ENCODE measurements at regions of chr16 and their contacts with region 1.

Region 1: DNA sequence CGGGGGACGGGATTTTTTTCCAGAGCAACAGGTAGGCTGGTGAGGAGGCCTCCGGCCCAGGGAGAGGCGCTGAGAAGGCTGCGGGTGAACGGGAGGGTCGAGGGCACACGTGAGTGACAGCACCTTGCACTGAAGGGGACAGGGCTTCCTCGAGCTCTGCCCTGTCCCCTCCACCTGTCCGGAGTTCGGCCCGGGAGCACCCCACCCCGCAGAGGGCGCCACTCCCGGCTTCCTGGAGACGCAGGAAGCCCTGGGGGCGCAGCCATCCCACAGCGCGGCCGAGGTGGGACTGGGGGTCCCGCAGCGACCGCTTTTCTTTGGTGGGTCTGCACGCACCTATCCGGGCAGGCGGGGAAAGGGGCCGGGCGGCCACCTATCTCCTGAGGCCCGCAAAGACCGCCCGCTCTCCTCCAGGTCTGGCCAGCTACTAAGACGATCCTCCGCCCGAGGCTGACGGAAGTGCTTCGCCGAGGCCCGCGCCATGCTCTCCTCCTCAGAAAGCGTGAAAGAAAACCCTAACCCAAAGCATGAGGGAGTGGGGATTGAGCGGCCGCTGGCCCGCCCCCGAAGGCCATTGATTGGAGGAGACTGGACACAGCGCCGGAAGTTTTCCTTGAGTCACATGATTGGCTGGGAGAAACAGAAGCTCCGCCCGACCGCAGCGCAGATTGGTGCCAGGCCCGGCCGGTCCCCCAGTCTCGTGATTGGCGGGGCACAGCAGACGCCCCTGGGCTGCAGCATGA is 34.3 kb downstream of the DDX19A start:
- DNase-seq: peak; percentile 93
- ATAC-seq: peak; percentile 90
- H3K4me3 ChIP-seq: peak overlapping the region; percentile 90 to 94
- H3K27ac ChIP-seq: peak overlapping the region; percentile 98
- H3K4me1 ChIP-seq: peaks cover 16 to 30% of the 10 kb centered on the region in 2 experiments; a peak in 3 of 4 replicates
- H3K27me3 ChIP-seq: no peaks in the 10 kb centered on the region
- CTCF ChIP-seq: peak in 2 of 3 experiments; percentile 21 to 32; a peak in 2 of 6 replicates
- POLR2A ChIP-seq: peak; percentile 92
- RAD21 ChIP-seq: peak; percentile 40

Region 2: GRCh38 chr16:70345840-70346239 is 35.2 kb before region 1 on chr16:
- CTCF ChIA-PET with region 1: no interaction called
- POLR2A ChIA-PET with region 1: interaction called, 11 read pairs
- RAD21 ChIA-PET with region 1: no interaction called
- intact Hi-C with region 1: no loop called
- DNase-seq: no peak
- ATAC-seq: no peak
- H3K4me3 ChIP-seq: peak overlapping the region; percentile 72 to 94
- H3K27ac ChIP-seq: peak overlapping the region; percentile 81
- H3K4me1 ChIP-seq: peaks cover 8 to 15% of the 10 kb centered on the region in 2 experiments
- H3K27me3 ChIP-seq: no peaks in the 10 kb centered on the region
- CTCF ChIP-seq: no peak
- POLR2A ChIP-seq: no peak
- RAD21 ChIP-seq: no peak

Region 3: DNA sequence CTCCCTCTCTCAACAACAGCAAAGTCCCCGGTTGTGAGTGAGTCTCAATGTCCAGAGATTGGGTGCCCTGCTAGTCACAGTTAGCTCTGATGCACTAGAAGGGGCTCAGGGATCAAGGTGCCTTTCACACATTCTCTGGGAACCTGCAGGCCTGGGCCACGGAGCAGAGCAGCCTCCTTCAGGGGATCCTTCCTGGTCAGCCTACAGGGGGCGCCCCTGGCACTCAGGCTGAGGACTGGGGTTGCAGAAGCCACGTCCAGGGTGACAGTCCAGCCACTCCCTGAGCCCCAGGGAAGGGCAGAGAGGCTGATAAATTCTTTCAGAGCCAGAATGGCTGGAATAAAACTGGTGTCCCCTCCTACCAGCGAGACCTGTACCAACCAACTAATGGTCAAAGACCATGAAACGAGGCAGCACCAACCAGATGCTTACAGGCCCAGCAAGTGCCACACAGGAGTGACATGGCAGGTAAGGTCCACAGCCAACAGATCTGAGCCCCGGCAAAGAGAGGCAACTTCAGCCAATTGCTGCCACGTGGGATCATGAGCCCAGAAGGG is 14.4 kb after region 1 on chr16:
- CTCF ChIA-PET with region 1: no interaction called
- POLR2A ChIA-PET with region 1: interaction called, 18 read pairs
- RAD21 ChIA-PET with region 1: no interaction called
- intact Hi-C with region 1: no loop called
- DNase-seq: no peak
- ATAC-seq: peak; percentile 92
- H3K4me3 ChIP-seq: no peak overlapping the region
- H3K27ac ChIP-seq: no peak overlapping the region
- H3K4me1 ChIP-seq: peaks cover 0 to 29% of the 10 kb centered on the region in 2 experiments; a peak in 3 of 4 replicates
- H3K27me3 ChIP-seq: no peaks in the 10 kb centered on the region
- CTCF ChIP-seq: peak; percentile 80 to 93 (median 91)
- POLR2A ChIP-seq: no peak
- RAD21 ChIP-seq: peak; percentile 94

Region 4: GRCh38 chr16:70438969-70439862 is 58.2 kb after region 1 on chr16 and contains the start of gene ST3GAL2:
- CTCF ChIA-PET with region 1: no interaction called
- POLR2A ChIA-PET with region 1: interaction called, 8 read pairs
- RAD21 ChIA-PET with region 1: no interaction called
- intact Hi-C with region 1: loop called (anchors 5 kb)
- DNase-seq: peak; percentile 54
- ATAC-seq: peak; percentile 92
- H3K4me3 ChIP-seq: peak within 1 kb of the TSS; percentile 56 to 70
- H3K27ac ChIP-seq: peak within 1 kb of the TSS; percentile 33; the same call in 1 of the 2 replicates
- H3K4me1 ChIP-seq: peaks cover 28 to 44% of the 10 kb centered on the region in 2 experiments
- H3K27me3 ChIP-seq: no peaks in the 10 kb centered on the region
- CTCF ChIP-seq: no peak
- POLR2A ChIP-seq: no peak
- RAD21 ChIP-seq: no peak
- total RNA-seq, gene ST3GAL2: 9.5 TPM

Region 5: DNA sequence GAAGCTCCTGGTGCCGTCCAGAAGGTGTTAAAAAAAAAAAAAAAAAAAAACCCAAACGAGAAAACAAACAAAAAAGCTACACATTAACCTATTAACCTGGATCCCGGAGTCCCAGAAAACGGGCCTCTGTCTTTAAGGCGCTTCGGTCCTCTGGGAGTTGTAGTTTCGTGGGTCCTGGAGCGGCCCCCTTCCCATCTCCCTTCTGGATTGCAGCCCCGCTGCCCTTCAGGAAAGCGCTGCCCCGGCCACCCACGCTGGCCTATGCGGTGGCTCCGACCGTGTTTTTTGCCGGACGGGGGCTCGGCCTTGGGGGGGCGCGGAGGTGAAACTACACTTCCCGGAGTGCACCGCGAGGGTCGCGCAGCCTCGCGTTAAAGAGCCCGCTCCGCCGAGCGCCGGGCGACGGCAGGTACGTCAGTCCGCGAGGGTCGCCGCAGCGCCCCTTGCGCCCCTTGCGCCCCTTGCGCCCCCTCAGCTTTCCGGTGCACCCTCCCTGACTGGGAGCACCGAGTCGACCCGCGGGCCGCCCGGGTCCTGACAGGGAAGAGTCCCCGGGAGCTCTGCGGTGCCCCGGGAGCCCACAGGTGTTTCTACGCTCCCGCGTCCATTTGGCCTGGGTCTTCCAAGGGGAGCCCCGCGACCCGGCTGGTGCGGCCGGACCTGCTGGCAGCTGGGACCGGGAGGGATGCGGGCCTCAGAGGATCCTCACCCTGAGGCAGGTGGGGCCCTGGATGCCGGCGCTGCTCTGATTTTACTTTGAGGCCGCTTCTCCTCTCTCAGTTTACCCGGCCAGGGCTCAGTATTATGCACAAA is 73.4 kb after region 1 on chr16 and contains the start of gene FCSK:
- CTCF ChIA-PET with region 1: interaction called, 4 read pairs
- POLR2A ChIA-PET with region 1: interaction called, 12 read pairs
- RAD21 ChIA-PET with region 1: no interaction called
- intact Hi-C with region 1: loop called (anchors 2 kb)
- DNase-seq: peak; percentile 50
- ATAC-seq: peak; percentile 87
- H3K4me3 ChIP-seq: peak within 1 kb of the TSS; percentile 90 to 92
- H3K27ac ChIP-seq: peak within 1 kb of the TSS; percentile 96
- H3K4me1 ChIP-seq: peaks cover 3 to 20% of the 10 kb centered on the region in 2 experiments; a peak in 2 of 4 replicates
- H3K27me3 ChIP-seq: no peaks in the 10 kb centered on the region
- CTCF ChIP-seq: no peak
- POLR2A ChIP-seq: no peak
- RAD21 ChIP-seq: peak; percentile 27; the same call in 1 of the 2 replicates
- total RNA-seq, gene FCSK: 17.1 TPM

Region 6: DNA sequence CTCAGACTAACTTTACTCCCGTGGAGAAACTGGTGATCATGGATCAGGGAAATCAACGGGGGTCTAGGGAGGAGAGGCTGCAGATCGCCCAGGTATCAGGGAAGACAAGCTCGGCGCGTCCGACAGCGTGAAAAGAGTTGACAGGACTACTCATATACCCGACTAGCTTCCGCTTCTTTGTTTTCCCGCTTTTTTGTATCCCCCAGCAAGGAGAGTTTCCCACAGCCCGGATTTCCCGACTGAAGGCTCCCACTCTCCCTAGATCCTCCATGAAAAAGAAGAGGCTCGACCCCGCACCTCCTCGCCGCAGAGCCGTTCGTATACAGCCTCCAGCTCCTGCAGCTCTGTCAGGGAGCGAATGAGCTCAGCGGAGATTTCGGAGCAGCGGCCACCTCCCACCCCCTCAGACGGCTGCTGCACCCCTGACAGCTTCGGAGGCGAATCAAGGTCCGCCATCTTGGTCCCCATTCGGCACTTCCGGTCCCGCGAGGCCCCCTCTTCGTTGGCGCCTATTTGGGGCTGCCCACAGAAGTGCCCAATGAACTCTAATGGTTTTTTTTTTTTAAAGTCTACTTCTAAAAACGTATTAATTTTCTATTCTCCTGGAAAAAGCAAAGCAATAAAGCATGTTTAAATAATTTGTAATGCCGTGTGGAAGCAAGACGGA is 142.2 kb after region 1 on chr16 and contains the start of gene COG4:
- CTCF ChIA-PET with region 1: no interaction called
- POLR2A ChIA-PET with region 1: interaction called, 6 read pairs
- RAD21 ChIA-PET with region 1: no interaction called
- intact Hi-C with region 1: loop called (anchors 1 kb)
- DNase-seq: peak; percentile 72
- ATAC-seq: peak; percentile 77
- H3K4me3 ChIP-seq: peak within 1 kb of the TSS; percentile 68 to 72
- H3K27ac ChIP-seq: peak within 1 kb of the TSS; percentile 71
- H3K4me1 ChIP-seq: peaks cover 7 to 16% of the 10 kb centered on the region in 2 experiments; a peak in 3 of 4 replicates
- H3K27me3 ChIP-seq: no peaks in the 10 kb centered on the region
- CTCF ChIP-seq: no peak
- POLR2A ChIP-seq: peak; percentile 41
- RAD21 ChIP-seq: no peak
- total RNA-seq, gene COG4: 54.2 TPM

Measured in HCT116 (cell line).